ENCODE measurements at regions of chr4 and their contacts with region 1.

Region 1: DNA sequence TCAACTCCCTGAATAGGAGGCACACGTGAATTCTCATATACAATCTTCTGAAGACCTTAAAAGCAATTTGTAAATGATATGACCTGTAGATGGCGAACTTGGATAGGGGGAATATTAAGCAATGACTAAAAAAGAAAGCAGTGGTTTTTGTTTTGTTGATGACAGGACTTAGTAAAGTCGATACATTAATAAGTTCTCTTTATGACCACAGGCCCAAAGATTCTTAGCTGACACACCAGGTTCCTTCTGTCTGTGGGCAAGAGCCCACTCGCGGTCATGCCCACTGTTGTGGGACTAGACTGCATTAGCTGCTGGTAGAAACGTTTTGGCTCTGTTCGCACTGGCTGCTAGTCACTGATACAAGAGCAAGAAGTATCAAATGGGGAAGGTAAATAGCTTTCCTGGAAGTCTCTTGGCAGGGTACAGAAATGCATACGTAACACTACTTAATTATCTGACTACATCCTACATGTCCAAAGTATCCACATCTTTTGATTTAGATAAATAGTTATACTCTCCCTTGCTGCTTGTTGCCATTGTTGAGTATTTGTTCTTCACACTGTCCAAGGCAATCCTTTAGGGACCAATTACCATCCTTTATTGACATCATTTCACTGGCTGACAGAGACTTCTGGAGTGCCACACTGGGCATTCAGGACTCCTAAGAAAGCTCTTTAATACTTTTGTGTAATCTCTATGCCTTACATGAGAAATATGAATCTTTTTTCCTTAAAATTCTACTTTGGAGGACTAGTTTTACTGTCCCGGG is 31.0 kb downstream of the ALPK1 start:
- DNase-seq: no peak
- H3K4me3 ChIP-seq: peak overlapping the region in 37 of 59 donors; percentile 10 to 52 (median 36)
- H3K27ac ChIP-seq: no peak overlapping the region
- H3K27me3 ChIP-seq: no peaks in the 10 kb centered on the region
- CTCF ChIP-seq: peak in 55 of 56 donors; percentile 26 to 83 (median 64)

Region 2: DNA sequence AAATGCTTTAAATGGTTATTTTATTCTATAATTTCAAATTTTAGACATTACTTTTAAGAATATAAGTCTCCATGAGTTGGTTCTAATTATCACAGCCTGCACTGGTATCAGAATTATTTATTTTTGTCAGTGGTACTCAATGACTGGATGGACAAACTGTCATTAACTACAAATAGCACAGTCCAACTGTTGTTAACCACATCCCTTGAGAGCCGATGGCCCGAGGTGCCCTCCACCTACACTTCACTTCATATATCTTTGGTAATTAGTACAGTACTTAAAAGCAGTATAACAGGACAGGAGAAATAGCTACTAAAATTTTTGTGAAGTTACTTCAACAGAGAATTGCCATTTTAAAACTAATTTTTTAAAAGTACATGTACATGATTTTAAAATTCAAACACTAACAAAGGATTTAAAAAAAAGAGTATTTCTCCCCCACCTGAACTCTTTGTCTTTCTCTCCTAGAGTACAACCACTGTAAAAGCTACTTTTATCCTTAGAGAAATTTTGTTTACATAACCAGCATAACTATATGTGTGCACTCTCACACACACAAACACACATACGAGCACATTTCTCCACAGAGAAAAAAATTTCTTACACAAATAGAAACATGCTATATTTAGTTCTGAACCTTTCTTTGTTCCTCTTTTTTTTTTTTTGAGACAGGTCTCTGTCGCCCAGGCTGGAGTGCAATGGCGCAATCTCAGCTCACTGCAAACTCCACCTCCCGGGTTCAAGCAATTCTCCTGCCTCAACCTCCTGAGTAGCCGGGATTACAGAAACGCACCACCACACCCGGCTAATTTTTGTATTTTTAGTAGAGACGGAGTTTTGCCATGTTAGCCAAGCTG is 48.9 kb before region 1 on chr4:
- intact Hi-C with region 1: no loop called
- DNase-seq: no peak
- H3K4me3 ChIP-seq: peak overlapping the region in 5 of 59 donors; percentile 0 to 39 (median 31)
- H3K27ac ChIP-seq: no peak overlapping the region
- H3K27me3 ChIP-seq: no peaks in the 10 kb centered on the region
- CTCF ChIP-seq: no peak

Region 3: DNA sequence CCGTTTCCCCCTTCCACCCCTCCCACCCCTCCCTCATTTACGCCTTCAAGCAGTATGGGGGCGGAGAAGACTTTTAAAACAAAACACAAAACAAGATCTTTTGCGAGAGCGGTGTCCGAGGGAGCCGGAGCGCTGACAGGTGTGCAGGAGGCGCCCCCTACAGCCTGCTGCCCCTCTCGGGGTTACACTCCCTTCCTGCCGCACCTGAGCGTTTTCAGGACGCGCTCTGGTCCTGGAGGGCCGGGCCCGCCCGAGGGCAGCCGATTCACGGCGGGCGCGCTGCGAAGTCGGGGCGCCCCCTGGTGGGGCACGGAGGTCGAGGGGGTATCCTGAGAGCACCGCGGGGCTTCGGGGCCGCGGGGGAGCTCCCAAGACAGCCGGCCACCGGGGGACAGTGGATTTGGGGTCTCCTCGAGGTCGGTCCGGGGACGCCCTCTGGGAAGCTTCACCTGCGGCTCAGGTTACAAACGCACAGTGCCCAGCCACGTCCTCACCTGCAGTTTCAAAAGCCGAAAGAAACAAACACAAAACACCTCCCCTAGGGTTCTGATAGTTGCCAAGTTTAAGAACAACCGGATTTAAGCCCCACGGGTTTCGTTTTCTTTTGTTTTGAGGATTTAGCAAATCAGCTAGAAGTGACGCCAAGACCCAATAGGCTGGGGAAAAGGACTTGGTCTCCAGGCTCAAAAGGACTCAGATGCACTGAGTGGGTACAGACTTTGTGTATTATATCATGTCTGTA is 195.8 kb after region 1 on chr4:
- intact Hi-C with region 1: loop called (anchors 2 to 5 kb)
- DNase-seq: peak in 1 of 10 donors; percentile 50
- H3K4me3 ChIP-seq: peak overlapping the region in 49 of 59 donors; percentile 1 to 61 (median 38)
- H3K27ac ChIP-seq: no peak overlapping the region
- H3K27me3 ChIP-seq: peaks cover 18 to 77% (median 64%) of the 10 kb centered on the region in 45 donors
- CTCF ChIP-seq: peak in 54 of 56 donors; percentile 37 to 80 (median 60)

Region 4: GRCh38 chr4:112604589-112604988 is 276.4 kb after region 1 on chr4:
- intact Hi-C with region 1: loop called (anchors 2 kb)
- DNase-seq: peak in 5 of 10 donors; percentile 14 to 68 (median 40)
- H3K4me3 ChIP-seq: no peak overlapping the region
- H3K27ac ChIP-seq: no peak overlapping the region
- H3K27me3 ChIP-seq: no peaks in the 10 kb centered on the region
- CTCF ChIP-seq: peak; percentile 42 to 87 (median 72)

Measured in dorsolateral prefrontal cortex (tissue), 120 donors.